HepG2 (cell line): ENCODE measurements at regions of chr1 and their contacts with region 1.

Region 1: GRCh38 chr1:178310685-178311105 is 186.1 kb downstream of the CLEC20A start:
- DNase-seq: peak; percentile 77
- ATAC-seq: peak; percentile 83
- H3K4me3 ChIP-seq: no peak overlapping the region
- H3K27ac ChIP-seq: no peak overlapping the region
- H3K4me1 ChIP-seq: no peaks in the 10 kb centered on the region
- H3K27me3 ChIP-seq: no peaks in the 10 kb centered on the region
- CTCF ChIP-seq: peak; percentile 80
- EP300 ChIP-seq: no peak
- POLR2A ChIP-seq: no peak
- RAD21 ChIP-seq: peak; percentile 51; the same call in 1 of the 2 replicates

Region 2: DNA sequence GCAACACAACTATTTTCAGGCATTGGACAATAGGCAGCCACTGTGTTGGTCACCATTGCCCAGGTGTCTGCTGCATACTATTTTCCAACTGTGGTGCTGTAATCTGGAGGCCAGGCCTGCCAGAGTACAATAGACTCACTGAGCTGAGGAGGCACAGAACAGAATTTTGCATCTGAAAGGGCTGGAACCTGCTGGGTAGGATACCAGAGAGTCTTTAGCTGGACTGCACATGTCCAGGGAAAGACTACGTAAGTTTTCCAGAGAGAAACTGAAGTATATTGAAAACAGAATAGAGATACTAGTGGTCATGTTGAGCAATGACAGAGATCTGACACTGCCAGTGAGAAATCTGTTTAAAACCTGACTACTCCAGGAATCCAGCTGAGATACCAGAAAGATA is 16.0 kb before region 1 on chr1:
- CTCF ChIA-PET with region 1: no interaction called
- POLR2A ChIA-PET with region 1: no interaction called
- in situ Hi-C with region 1: no loop called
- intact Hi-C with region 1: no loop called
- DNase-seq: no peak
- ATAC-seq: peak; percentile 56
- H3K4me3 ChIP-seq: no peak overlapping the region
- H3K27ac ChIP-seq: no peak overlapping the region
- H3K4me1 ChIP-seq: no peaks in the 10 kb centered on the region
- H3K27me3 ChIP-seq: no peaks in the 10 kb centered on the region
- CTCF ChIP-seq: no peak
- EP300 ChIP-seq: no peak
- POLR2A ChIP-seq: no peak
- RAD21 ChIP-seq: no peak

Region 3: GRCh38 chr1:178371235-178371634 is 60.5 kb after region 1 on chr1:
- CTCF ChIA-PET with region 1: no interaction called
- POLR2A ChIA-PET with region 1: no interaction called
- in situ Hi-C with region 1: loop called (anchors 10 kb)
- intact Hi-C with region 1: no loop called
- DNase-seq: no peak
- ATAC-seq: no peak
- H3K4me3 ChIP-seq: no peak overlapping the region
- H3K27ac ChIP-seq: no peak overlapping the region
- H3K4me1 ChIP-seq: no peaks in the 10 kb centered on the region
- H3K27me3 ChIP-seq: no peaks in the 10 kb centered on the region
- CTCF ChIP-seq: no peak
- EP300 ChIP-seq: no peak
- POLR2A ChIP-seq: no peak
- RAD21 ChIP-seq: no peak